ENCODE measurements at regions of chrX and their contacts with region 1.

Region 1: DNA sequence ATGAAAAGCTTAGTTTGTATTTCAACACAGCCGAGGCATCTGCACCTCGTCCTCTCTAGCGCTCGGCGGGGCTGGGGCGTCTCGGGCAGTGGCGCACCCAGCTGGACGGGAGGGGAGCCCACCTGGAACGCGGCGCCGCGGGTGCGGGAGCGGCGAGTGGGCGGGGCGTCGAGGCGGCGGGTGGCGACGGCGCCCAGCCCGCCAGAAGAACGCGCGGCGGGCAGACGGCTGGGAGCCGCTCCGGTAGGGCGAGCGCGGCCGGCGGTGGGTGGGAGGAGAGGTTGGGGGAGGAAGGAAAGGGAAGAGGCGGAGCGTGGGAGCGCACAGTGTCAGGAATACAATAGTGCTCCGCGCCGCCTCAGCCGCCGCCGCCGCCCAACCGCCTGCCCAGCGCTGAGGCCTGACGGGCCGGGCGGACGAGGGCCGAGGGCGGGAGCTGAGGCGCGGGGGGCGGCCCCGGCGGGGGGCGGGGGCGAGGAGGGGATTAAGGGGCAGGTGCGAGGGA is at the start of gene JADE3:
- DNase-seq: peak; percentile 87
- H3K4me3 ChIP-seq: peak within 1 kb of the TSS; percentile 68 to 69
- H3K27ac ChIP-seq: peak within 1 kb of the TSS; percentile 55 to 71; a peak in 3 of 4 replicates
- H3K4me1 ChIP-seq: peaks cover 0 to 3% of the 10 kb centered on the region in 2 experiments; a peak in 1 of 4 replicates
- H3K27me3 ChIP-seq: no peaks in the 10 kb centered on the region; the same call in 1 of the 2 replicates
- CTCF ChIP-seq: no peak
- EP300 ChIP-seq: no peak
- RAD21 ChIP-seq: no peak
- polyA plus RNA-seq, gene JADE3: 3.0 and 4.3 TPM in 2 replicates

Region 2: DNA sequence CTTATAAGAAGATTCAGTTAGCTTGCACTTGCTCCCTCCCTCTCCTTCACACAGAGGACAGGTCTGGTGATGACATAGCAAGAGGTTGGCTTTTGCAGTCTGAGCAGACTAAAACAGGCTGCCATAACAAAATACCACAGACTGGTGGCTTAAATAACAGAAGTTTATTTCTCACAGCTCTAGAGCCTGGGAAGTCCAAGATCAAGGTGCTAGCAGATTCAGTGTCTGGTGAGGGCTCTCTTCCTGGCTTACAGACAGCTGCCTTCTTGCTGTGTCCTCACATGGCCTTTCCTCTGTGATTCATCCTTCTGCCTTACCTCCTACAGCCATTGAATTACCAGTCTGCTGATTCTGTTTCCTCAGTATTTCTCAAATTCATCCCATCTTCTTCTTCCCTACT is 62.2 kb before region 1 on chrX:
- CTCF ChIA-PET with region 1: no interaction called
- POLR2A ChIA-PET with region 1: no interaction called
- DNase-seq: no peak
- H3K4me3 ChIP-seq: no peak overlapping the region
- H3K27ac ChIP-seq: no peak overlapping the region
- H3K4me1 ChIP-seq: no peaks in the 10 kb centered on the region
- H3K27me3 ChIP-seq: no peaks in the 10 kb centered on the region; the same call in 1 of the 2 replicates
- CTCF ChIP-seq: no peak
- EP300 ChIP-seq: no peak
- RAD21 ChIP-seq: no peak

Region 3: DNA sequence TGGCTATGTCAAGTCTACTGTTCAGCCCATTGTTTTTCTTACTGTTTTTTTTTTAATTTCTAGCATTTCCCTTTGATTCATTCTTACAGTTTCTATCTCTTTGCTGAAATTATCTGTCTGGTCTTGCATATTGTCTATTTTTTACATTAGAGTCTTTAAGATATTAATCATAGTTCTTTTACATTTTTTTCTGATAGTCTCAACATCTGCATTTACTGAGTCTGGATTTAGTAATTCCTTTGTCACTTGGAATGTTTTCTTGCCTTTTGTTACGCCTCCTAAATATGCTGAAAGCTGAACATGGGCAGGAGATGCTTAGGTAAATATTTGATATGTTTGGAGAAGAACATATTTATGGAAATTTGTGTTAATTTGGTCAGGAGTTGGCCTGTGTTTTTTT is 10.5 kb after region 1 on chrX:
- CTCF ChIA-PET with region 1: interaction called, 13 read pairs
- POLR2A ChIA-PET with region 1: no interaction called
- DNase-seq: no peak
- H3K4me3 ChIP-seq: no peak overlapping the region
- H3K27ac ChIP-seq: 0 out of 4 replicates have a peak overlapping the region, but pooled peaks of 1 of the 2 experiments have one; percentile 19
- H3K4me1 ChIP-seq: peaks cover 0 to 2% of the 10 kb centered on the region in 2 experiments; a peak in 2 of 4 replicates
- H3K27me3 ChIP-seq: no peaks in the 10 kb centered on the region; the same call in 1 of the 2 replicates
- CTCF ChIP-seq: no peak
- EP300 ChIP-seq: no peak
- RAD21 ChIP-seq: no peak

Region 4: GRCh38 chrX:46978341-46979291 is 66.5 kb after region 1 on chrX:
- CTCF ChIA-PET with region 1: interaction called, 12 read pairs
- POLR2A ChIA-PET with region 1: no interaction called
- DNase-seq: peak; percentile 42
- H3K4me3 ChIP-seq: peak overlapping the region in 1 of 2 experiments; percentile 30; a peak in 1 of 4 replicates
- H3K27ac ChIP-seq: peak overlapping the region; percentile 64 to 99; a peak in 3 of 4 replicates
- H3K4me1 ChIP-seq: peaks cover 0 to 6% of the 10 kb centered on the region in 2 experiments; a peak in 2 of 4 replicates
- H3K27me3 ChIP-seq: no peaks in the 10 kb centered on the region; the same call in 1 of the 2 replicates
- CTCF ChIP-seq: peak; percentile 87
- EP300 ChIP-seq: no peak
- RAD21 ChIP-seq: peak; percentile 63

Region 5: DNA sequence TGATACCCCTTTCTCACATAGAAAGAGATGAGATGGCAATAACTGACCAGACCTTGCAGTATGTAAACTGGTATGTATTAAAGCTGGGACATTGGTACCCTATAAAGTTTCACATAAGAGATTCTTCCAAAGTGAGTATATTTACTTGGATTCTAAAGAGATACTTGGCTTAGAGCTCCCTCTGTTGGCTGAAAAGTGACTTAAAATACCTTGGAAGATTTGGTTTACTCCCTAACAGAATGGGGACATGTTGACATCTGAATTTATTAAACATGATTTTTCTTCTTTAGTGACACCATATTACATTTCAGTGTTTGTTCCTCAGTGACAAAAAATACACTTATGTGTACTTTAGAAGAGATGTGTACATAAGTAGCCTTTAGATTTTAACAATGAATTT is 118.2 kb after region 1 on chrX:
- CTCF ChIA-PET with region 1: interaction called, 16 read pairs
- POLR2A ChIA-PET with region 1: no interaction called
- DNase-seq: peak; percentile 41
- H3K4me3 ChIP-seq: no peak overlapping the region
- H3K27ac ChIP-seq: no peak overlapping the region
- H3K4me1 ChIP-seq: no peaks in the 10 kb centered on the region
- H3K27me3 ChIP-seq: no peaks in the 10 kb centered on the region
- CTCF ChIP-seq: peak; percentile 80
- EP300 ChIP-seq: no peak
- RAD21 ChIP-seq: peak; percentile 81